ENCODE measurements at regions of chr6 and their contacts with region 1.

Region 1: DNA sequence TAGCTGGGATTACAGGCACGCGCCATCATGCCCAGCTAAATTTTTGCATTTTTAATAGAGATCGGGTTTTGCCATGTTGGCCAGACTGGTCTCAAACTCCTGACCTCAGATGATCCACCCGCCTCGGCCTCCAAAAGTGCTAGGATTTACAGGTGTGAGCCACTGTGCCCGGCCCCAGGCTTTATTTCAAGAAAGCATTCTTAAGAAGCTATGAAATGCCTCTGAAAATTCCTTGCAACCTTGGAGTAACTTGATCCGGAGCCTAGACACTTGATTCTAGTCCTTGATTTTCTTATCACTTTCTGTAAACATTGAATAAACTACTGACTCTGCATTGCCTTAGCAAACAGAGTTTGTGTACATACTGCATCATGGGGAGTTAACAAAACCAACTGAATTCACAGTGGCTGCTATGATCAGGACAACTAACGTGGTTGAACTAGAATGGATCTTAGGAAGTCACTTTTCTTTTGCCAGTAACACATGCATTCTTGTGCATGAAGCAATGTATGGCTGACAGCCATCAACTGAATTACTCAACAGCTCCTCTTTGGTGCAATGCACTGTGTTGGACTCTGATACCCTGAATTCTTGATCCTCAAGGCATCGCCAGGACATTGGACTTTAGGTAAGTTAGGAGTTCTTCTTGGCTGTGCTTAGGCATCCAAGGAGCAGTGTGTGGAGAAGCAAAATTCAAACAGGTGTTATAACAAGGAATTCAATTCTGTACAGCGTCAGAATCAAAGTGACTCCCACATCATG is 102.8 kb upstream of the TMEM170B start:
- DNase-seq: no peak
- H3K4me3 ChIP-seq: no peak overlapping the region
- H3K27ac ChIP-seq: peak overlapping the region in 3 of 4 donors; percentile 69 to 75 (median 70)
- H3K4me1 ChIP-seq: peaks cover 29 to 53% (median 32%) of the 10 kb centered on the region in 4 donors
- H3K27me3 ChIP-seq: no peaks in the 10 kb centered on the region
- CTCF ChIP-seq: no peak
- EP300 ChIP-seq: no peak
- POLR2A ChIP-seq: no peak

Region 2: DNA sequence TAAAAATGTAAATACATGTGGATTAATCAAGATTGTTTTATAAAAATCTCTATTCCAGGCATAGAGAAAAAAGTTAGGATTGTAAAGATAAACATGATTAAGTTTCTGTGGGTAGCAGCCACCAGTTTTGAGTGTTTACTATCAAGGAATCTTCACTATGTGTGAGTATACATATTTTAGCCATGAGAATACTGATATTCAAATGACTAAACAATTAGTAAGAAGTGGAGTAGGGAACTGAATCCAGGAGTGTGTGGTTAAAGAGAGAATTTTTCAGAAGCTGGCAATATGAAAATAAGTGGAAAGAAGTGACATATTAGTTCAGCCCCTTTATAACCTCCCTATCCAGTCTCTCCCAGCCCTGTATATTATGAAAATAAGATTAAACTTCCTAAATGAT is 400.9 kb before region 1 on chr6:
- intact Hi-C with region 1: no loop called
- DNase-seq: no peak
- H3K4me3 ChIP-seq: no peak overlapping the region
- H3K27ac ChIP-seq: no peak overlapping the region
- H3K4me1 ChIP-seq: no peaks in the 10 kb centered on the region
- H3K27me3 ChIP-seq: peaks cover 0 to 14% (median 0%) of the 10 kb centered on the region in 4 donors
- CTCF ChIP-seq: no peak
- EP300 ChIP-seq: no peak
- POLR2A ChIP-seq: no peak

Region 3: GRCh38 chr6:11473008-11473740 is 38.4 kb after region 1 on chr6:
- intact Hi-C with region 1: loop called (anchors 5 kb)
- DNase-seq: no peak
- H3K4me3 ChIP-seq: peak overlapping the region; percentile 23 to 46 (median 32)
- H3K27ac ChIP-seq: peak overlapping the region in 2 of 4 donors; percentile 19 to 60
- H3K4me1 ChIP-seq: peaks cover 0 to 19% (median 15%) of the 10 kb centered on the region in 4 donors
- H3K27me3 ChIP-seq: no peaks in the 10 kb centered on the region
- CTCF ChIP-seq: no peak
- EP300 ChIP-seq: no peak
- POLR2A ChIP-seq: no peak

Measured in esophagus muscularis mucosa (tissue), 4 donors.